Psoas muscle (tissue), 8 donors: ENCODE measurements at regions of chr19 and their contacts with region 1.

Region 1: GRCh38 chr19:10251792-10252694 is at the start of gene MRPL4:
- DNase-seq: peak; percentile 95 to 97
- ATAC-seq: peak; percentile 95 to 97 (median 96)
- H3K4me3 ChIP-seq: peak within 1 kb of the TSS; percentile 93
- H3K27ac ChIP-seq: peak within 1 kb of the TSS; percentile 89
- H3K4me1 ChIP-seq: peaks cover 4% of the 10 kb centered on the region
- H3K27me3 ChIP-seq: no peaks in the 10 kb centered on the region
- CTCF ChIP-seq: no peak
- total RNA-seq, gene MRPL4: 54.9 to 94.0 (median 58.9) TPM

Region 2: DNA sequence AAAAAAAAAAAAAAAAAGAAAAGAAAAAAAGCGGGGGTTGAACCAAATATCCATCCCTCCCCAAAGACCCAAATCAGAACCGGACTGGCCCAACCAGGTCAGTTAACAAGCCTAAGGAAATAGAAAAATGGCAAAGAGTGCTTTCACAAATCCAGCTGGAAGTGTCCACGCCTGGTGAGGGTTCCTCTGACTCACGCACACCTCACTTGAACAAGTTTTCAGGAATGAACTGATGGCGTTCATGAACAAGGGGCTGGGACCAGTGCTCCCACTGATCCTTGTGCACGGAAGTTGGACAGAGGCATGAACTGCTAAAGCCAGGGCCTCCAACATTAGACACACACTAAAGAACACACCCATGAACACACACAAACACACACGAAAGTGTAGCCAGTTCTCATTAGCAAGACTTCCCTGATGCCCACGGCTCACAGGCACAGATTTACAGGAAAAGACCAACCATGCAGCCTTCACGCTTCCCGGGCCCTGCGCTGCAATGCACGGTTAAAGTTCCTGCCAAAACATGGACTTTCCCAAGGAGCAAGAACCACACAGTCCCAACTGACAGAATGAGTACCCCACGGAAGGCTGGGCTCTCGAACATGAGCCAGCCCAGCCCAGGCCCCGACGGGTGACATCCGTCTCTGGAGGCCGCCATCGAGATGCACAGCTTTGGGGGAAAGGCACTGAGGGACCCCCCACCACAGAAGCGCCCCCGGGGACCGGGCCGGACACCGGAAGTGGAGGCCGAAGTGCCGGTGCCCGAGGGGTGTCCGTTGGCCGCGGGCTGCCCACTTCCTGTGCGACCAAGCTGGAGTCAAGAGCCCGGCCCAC is 58.2 kb before region 1 on chr19:
- intact Hi-C with region 1: loop called in 1 of 2 experiments (anchors 2 kb)
- DNase-seq: no peak
- ATAC-seq: peak; percentile 46 to 67 (median 58)
- H3K4me3 ChIP-seq: peak overlapping the region; percentile 87
- H3K27ac ChIP-seq: peak overlapping the region; percentile 74
- H3K4me1 ChIP-seq: peaks cover 8% of the 10 kb centered on the region
- H3K27me3 ChIP-seq: no peaks in the 10 kb centered on the region
- CTCF ChIP-seq: no peak

Region 3: GRCh38 chr19:10219678-10220077 is 32.4 kb before region 1 on chr19:
- intact Hi-C with region 1: no loop called
- DNase-seq: no peak
- ATAC-seq: no peak
- H3K4me3 ChIP-seq: no peak overlapping the region
- H3K27ac ChIP-seq: no peak overlapping the region
- H3K4me1 ChIP-seq: no peaks in the 10 kb centered on the region
- H3K27me3 ChIP-seq: no peaks in the 10 kb centered on the region
- CTCF ChIP-seq: no peak

Region 4: GRCh38 chr19:10334588-10335351 is 82.7 kb after region 1 on chr19:
- intact Hi-C with region 1: no loop called
- DNase-seq: peak; percentile 95 to 98
- ATAC-seq: peak; percentile 82 to 85 (median 84)
- H3K4me3 ChIP-seq: peak overlapping the region; percentile 69
- H3K27ac ChIP-seq: peak overlapping the region; percentile 84
- H3K4me1 ChIP-seq: peaks cover 12% of the 10 kb centered on the region
- H3K27me3 ChIP-seq: no peaks in the 10 kb centered on the region
- CTCF ChIP-seq: no peak

Region 5: DNA sequence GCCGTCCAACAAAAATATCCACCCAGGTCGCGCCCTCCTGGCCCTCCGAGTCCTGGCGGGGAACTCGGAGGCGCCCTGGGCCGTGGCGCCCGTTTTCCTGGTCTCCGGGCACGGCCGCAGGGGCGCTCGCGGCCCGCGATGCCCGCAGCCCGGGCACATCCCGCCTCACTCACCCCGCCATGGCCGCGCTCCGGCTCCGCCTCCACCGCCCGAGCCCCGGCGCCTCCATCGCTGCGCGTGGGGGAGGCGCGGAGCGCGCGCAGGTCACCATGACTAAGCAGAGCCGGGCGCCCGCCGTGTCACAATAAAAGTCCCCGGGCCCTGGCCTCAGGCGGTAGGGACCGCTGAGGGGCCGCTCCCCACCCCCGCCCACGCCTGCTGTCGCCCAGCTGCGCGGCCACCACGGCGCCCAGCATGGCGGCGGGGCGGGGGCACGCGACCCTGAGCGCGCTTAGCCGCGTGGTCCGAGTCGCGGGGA is 250.5 kb after region 1 on chr19:
- intact Hi-C with region 1: no loop called
- DNase-seq: peak; percentile 95 to 97
- ATAC-seq: peak; percentile 89 to 95 (median 94)
- H3K4me3 ChIP-seq: peak overlapping the region; percentile 90
- H3K27ac ChIP-seq: peak overlapping the region; percentile 98
- H3K4me1 ChIP-seq: peaks cover 32% of the 10 kb centered on the region
- H3K27me3 ChIP-seq: no peaks in the 10 kb centered on the region
- CTCF ChIP-seq: no peak